Activated T-helper 1 cell treated with anti-CD3 and anti-CD28 coated beads, Interleukin-12 subunit alpha, Interleukin-12 subunit beta, Interleukin-2, Interleukin-4 antibody, amounts not matched to agents 30 ng/mL and 10 ng/mL and 1 ng/mL, durations not matched to agents 14 hours and 24 hours and 36 hours (primary cell): ENCODE measurements at regions of chr18 and their contacts with region 1.

Region 1: DNA sequence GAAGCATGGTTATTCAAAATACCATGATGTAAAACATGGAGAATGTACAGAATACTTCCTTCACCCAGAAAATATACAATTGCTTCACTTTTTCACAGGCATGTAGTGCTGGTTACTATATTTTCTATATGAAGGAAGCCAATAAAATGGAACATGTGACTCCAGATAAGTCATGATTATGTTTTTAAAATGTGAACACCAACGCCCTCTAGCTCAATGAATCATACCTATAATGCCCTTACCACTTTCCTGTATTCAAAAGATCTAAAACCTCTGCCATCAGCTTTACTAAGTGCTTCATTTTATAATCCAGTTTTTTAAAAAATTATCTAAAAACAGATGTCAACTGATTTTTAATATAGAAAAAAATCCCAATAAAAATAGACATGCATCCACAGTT is 59.9 kb downstream of the SMAD2 start:
- DNase-seq: no peak
- H3K4me3 Mint-ChIP-seq: no peak overlapping the region
- H3K27ac Mint-ChIP-seq: peak overlapping the region; percentile 4
- H3K4me1 Mint-ChIP-seq: peaks cover 34% of the 10 kb centered on the region
- H3K27me3 Mint-ChIP-seq: no peaks in the 10 kb centered on the region

Region 2: GRCh38 chr18:48007955-48008701 is 137.5 kb after region 1 on chr18:
- intact Hi-C with region 1: no loop called
- DNase-seq: peak; percentile 21
- H3K4me3 Mint-ChIP-seq: peak overlapping the region; percentile 60
- H3K27ac Mint-ChIP-seq: no peak overlapping the region
- H3K4me1 Mint-ChIP-seq: no peaks in the 10 kb centered on the region
- H3K27me3 Mint-ChIP-seq: peaks cover 23% of the 10 kb centered on the region

Region 3: GRCh38 chr18:48022531-48023329 is 152.1 kb after region 1 on chr18:
- intact Hi-C with region 1: loop called (anchors 5 kb)
- DNase-seq: no peak
- H3K4me3 Mint-ChIP-seq: no peak overlapping the region
- H3K27ac Mint-ChIP-seq: no peak overlapping the region
- H3K4me1 Mint-ChIP-seq: peaks cover 12% of the 10 kb centered on the region
- H3K27me3 Mint-ChIP-seq: peaks cover 11% of the 10 kb centered on the region